Prostate gland (tissue), 2 donors: ENCODE measurements at regions of chr11 and their contacts with region 1.

Region 1: GRCh38 chr11:66466225-66467027 is at the start of gene PELI3:
- DNase-seq: peak; percentile 91
- H3K4me3 ChIP-seq: peak within 1 kb of the TSS; percentile 71 to 72
- H3K27ac ChIP-seq: peak within 1 kb of the TSS; percentile 72 to 76
- H3K4me1 ChIP-seq: peaks cover 3% of the 10 kb centered on the region
- H3K27me3 ChIP-seq: no peaks in the 10 kb centered on the region
- CTCF ChIP-seq: peak in 1 of 4 experiments; percentile 3
- POLR2A ChIP-seq: peak; percentile 60
- total RNA-seq, gene PELI3: 23.9 to 27.0 TPM

Region 2: DNA sequence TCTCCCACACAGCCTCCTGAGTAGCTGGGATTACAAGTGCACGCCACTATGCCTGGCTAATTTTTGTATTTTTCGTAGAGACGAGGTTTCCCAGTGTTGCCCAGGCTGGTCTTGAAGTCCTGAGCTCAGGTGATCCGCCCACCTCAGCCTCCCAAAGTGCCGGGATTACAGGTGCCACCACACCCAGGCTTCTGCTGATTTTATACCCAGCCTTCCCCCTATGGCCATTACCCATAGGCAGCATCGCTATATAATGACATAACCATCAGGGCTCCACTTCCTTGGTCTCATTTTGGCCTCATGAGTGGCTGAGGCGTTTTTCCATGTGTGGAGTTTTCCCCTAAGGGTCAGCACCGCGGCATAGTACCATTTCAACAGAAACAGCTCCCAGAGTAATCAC is 258.6 kb before region 1 on chr11:
- intact Hi-C with region 1: no loop called
- DNase-seq: no peak
- H3K4me3 ChIP-seq: no peak overlapping the region
- H3K27ac ChIP-seq: no peak overlapping the region
- H3K4me1 ChIP-seq: no peaks in the 10 kb centered on the region
- H3K27me3 ChIP-seq: no peaks in the 10 kb centered on the region
- CTCF ChIP-seq: no peak
- POLR2A ChIP-seq: no peak

Region 3: DNA sequence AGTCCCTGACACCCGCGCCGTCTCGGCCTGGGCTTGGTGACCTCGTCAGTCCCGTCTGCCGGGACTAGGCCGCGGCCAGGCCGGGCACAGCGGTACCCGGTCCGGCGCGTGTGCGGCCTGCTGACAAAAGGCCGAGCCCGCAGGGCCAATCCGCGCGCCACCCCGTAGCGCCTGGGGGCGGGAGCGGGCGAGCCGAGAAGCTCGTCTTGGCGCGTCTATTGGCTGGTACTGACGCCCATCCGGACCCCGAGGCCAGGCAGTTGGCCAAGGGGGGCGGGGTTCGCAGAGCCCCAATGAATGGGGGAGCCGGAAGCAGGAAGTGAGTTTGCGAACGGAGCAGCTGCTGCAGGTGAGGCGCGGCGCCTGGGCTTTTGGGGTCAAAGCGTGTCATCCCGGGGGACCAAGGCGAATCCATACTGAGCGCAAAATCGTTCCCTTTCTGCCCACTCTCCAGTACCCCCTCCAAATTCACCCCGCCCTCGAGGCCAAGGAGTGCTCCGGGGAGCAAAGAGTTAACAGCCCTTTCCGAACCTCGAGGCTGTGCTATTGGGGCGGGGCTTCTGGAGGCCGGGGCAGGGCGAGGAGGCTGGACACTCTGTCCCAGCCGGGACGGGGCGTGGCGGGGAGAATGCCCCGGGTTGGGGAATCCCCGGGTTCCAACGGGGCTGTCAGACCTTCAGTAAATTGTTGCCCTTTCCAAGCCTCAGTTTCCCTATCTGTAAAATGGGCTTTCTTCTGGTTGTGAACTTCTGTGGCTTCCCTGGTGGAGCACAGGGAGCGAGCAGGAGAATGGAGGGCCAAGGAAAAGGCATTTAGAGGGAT is 13.9 kb after region 1 on chr11 and contains the start of gene DPP3:
- intact Hi-C with region 1: loop called (anchors 2 kb)
- DNase-seq: peak; percentile 97
- H3K4me3 ChIP-seq: peak within 1 kb of the TSS; percentile 59 to 63
- H3K27ac ChIP-seq: peak within 1 kb of the TSS; percentile 85 to 90
- H3K4me1 ChIP-seq: no peaks in the 10 kb centered on the region
- H3K27me3 ChIP-seq: no peaks in the 10 kb centered on the region
- CTCF ChIP-seq: peak in 2 of 4 experiments; percentile 15 to 31
- POLR2A ChIP-seq: peak; percentile 91
- total RNA-seq, gene DPP3: 37.0 to 53.6 TPM